AG04450 (cell line): ENCODE measurements at regions of chr7 and their contacts with region 1.

Region 1: DNA sequence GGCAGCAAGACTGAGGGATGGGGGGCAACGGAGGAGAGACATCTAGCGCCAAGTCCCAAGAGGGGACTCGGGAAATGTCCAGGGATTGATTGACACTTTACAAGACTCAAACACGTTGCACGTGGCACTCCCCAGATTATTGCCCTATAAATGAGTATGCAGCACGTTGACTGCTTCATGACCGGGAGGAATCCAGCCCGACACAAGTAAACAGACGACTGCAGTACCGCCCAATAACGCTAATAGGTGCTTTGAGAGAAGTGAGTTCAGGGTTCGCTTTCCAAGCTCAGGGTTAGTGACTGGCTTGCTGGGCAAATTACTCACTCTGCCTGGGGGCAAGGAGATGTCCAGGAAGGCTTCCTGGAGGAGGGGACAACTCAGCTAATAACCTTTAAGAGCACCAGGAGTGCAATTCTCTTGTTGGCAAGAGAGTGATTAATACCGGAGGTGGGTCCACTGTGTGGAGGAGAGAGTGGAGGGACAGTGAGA is 73.3 kb upstream of the MYL10 start:
- DNase-seq: no peak
- H3K4me3 ChIP-seq: no peak overlapping the region
- H3K27ac ChIP-seq: no peak overlapping the region
- H3K27me3 ChIP-seq: peaks cover 44% of the 10 kb centered on the region
- CTCF ChIP-seq: peak; percentile 13; the same call in 1 of the 2 replicates

Region 2: DNA sequence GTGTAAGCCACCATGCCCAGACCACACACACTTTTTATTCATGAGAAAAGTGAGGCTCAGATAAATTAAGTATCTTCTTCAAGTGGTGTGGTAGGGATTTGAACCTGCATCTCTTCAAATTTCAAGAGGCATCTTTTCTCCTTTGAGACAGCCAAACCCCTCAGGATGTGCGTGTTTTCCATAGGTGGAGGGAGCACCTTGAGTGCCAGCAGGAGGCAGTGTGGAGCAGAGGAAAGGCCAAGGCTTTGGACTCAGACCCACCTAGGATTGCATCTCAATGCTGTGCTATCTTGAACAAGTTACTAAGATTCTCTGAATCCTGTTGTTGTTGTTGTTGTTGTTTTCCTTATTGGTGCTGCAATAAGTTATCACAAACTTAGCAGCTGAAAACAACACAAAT is 33.1 kb before region 1 on chr7:
- CTCF ChIA-PET with region 1: no interaction called
- POLR2A ChIA-PET with region 1: no interaction called
- DNase-seq: no peak
- H3K4me3 ChIP-seq: no peak overlapping the region
- H3K27ac ChIP-seq: no peak overlapping the region
- H3K27me3 ChIP-seq: peaks cover 12% of the 10 kb centered on the region
- CTCF ChIP-seq: peak; percentile 31; the same call in 1 of the 2 replicates

Region 3: GRCh38 chr7:101688183-101688831 is 14.1 kb before region 1 on chr7:
- CTCF ChIA-PET with region 1: interaction called, 10 read pairs
- POLR2A ChIA-PET with region 1: no interaction called
- DNase-seq: peak; percentile 18
- H3K4me3 ChIP-seq: peak overlapping the region; percentile 41
- H3K27ac ChIP-seq: no peak overlapping the region
- H3K27me3 ChIP-seq: peaks cover 4% of the 10 kb centered on the region
- CTCF ChIP-seq: peak; percentile 84

Region 4: DNA sequence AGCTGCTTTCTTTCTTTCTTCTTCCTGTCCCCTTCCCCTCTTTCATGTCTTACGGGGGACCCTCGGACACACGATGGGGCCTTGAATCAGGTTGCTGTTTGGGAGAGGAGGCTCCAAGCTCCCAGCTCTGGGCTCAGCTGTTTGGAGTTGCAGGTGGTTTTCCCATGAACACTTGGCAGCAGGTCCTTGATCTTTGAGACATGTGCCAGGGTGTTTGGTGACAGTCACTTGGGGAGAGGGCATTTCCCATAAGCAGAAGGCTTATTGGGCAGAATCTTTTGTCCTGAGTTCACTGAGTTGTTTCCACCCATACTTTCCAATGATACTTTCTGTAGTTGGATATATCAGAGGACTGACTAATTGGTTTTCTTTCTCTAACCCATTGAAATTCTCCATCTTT is 479.6 kb after region 1 on chr7:
- CTCF ChIA-PET with region 1: no interaction called
- POLR2A ChIA-PET with region 1: no interaction called
- DNase-seq: no peak
- H3K4me3 ChIP-seq: no peak overlapping the region
- H3K27ac ChIP-seq: no peak overlapping the region
- H3K27me3 ChIP-seq: no peaks in the 10 kb centered on the region
- CTCF ChIP-seq: no peak